Right lobe of liver (tissue), 6 donors: ENCODE measurements at regions of chr17 and their contacts with region 1.

Region 1: DNA sequence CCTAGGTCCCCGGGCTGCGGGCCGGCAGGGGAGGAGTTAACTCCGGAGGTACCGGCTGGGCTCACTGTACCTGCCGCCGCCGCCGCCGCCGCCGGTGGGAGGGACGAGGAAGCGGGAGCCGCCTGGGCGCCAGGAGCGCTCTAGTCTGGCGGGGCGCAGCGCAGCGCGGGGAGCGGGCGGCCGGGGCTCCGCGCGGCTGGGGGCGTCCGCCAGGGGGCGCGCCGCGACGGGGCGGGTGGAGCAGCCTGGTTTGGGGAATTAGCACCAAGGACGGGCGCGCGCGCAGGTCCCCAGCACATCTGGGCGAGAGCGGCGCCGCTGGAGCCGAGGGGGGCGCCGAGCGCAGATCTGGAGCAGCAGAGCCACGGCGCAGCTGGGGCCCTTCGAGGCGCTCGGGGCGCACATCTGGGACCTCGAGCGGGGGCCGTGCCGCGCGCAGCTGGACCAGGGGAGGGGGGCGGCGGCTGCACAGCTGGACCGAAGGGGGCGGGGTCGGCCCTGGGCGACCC is at the start of gene NXPH3:
- DNase-seq: peak in 2 of 3 donors; percentile 64 to 72
- ATAC-seq: peak; percentile 61 to 85 (median 67)
- H3K4me3 ChIP-seq: peak within 1 kb of the TSS; percentile 28 to 45 (median 36)
- H3K27ac ChIP-seq: no peak within 1 kb of the TSS
- H3K4me1 ChIP-seq: peaks cover 0 to 8% (median 0%) of the 10 kb centered on the region in 4 donors
- H3K27me3 ChIP-seq: peaks cover 0 to 9% of the 10 kb centered on the region in 2 donors
- CTCF ChIP-seq: peak; percentile 24 to 80 (median 57)
- POLR2A ChIP-seq: no peak
- total RNA-seq, gene NXPH3: 0.09 to 0.43 (median 0.21) TPM in 5 of 6 experiments, not detected in the other

Region 2: DNA sequence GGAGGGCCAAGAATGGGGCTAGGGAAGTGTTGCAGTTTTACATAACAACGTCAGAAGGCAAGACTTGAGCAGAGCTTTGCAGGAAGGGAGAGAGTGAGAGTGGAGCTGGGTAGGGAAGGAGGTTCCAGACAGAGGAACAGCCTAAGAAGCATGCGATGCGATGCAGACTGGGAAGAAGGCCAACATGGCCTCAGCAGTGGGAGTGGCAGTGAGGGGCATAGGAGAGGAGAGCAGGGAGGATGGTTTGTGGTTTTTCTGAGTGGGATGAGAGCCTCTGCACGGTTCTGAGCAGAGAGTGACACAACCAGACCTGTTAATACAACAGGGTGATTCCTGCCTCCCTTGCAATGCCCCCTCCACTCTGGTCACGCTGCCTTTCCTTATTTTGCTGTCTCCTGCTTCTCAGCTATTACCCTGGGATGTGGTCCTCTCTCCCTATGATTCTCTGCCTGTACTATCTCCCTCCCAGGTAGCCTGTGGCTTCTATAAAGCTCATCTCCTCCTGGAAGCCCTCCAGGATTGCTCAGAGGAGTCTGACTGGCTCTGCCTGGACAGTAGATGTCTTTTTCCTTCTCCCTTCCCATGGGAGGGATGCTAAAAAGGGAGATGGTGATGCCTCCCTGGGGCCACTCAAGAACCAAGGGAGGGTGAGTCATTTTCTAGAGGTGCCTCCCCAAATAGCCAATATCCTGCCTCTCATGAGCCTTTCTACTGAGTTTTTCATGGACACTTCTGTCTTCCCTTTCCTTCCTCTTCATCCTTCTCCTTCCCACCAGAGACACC is 119.3 kb before region 1 on chr17:
- intact Hi-C with region 1: no loop called
- DNase-seq: no peak
- ATAC-seq: no peak
- H3K4me3 ChIP-seq: no peak overlapping the region
- H3K27ac ChIP-seq: no peak overlapping the region
- H3K4me1 ChIP-seq: no peaks in the 10 kb centered on the region
- H3K27me3 ChIP-seq: no peaks in the 10 kb centered on the region
- CTCF ChIP-seq: no peak
- POLR2A ChIP-seq: no peak

Region 3: GRCh38 chr17:49482144-49482817 is 93.4 kb before region 1 on chr17:
- intact Hi-C with region 1: no loop called
- DNase-seq: no peak
- ATAC-seq: no peak
- H3K4me3 ChIP-seq: no peak overlapping the region
- H3K27ac ChIP-seq: no peak overlapping the region
- H3K4me1 ChIP-seq: no peaks in the 10 kb centered on the region
- H3K27me3 ChIP-seq: no peaks in the 10 kb centered on the region
- CTCF ChIP-seq: no peak
- POLR2A ChIP-seq: no peak

Region 4: GRCh38 chr17:49634485-49634860 is 58.8 kb after region 1 on chr17:
- intact Hi-C with region 1: no loop called
- DNase-seq: no peak
- ATAC-seq: peak in 1 of 4 donors; percentile 28
- H3K4me3 ChIP-seq: no peak overlapping the region
- H3K27ac ChIP-seq: no peak overlapping the region
- H3K4me1 ChIP-seq: peaks cover 0 to 68% (median 25%) of the 10 kb centered on the region in 4 donors
- H3K27me3 ChIP-seq: no peaks in the 10 kb centered on the region
- CTCF ChIP-seq: no peak
- POLR2A ChIP-seq: no peak

Region 5: GRCh38 chr17:49694847-49695683 is 119.4 kb after region 1 on chr17:
- intact Hi-C with region 1: loop called (anchors 2 to 5 kb)
- DNase-seq: peak in 1 of 3 donors; percentile 38
- ATAC-seq: peak; percentile 67 to 82 (median 75)
- H3K4me3 ChIP-seq: no peak overlapping the region
- H3K27ac ChIP-seq: no peak overlapping the region
- H3K4me1 ChIP-seq: no peaks in the 10 kb centered on the region
- H3K27me3 ChIP-seq: peaks cover 0 to 3% of the 10 kb centered on the region in 2 donors
- CTCF ChIP-seq: peak; percentile 89 to 93 (median 91)
- POLR2A ChIP-seq: no peak

Region 6: GRCh38 chr17:49699966-49700575 is 124.4 kb after region 1 on chr17:
- intact Hi-C with region 1: loop called (anchors 2 to 5 kb)
- DNase-seq: no peak
- ATAC-seq: no peak
- H3K4me3 ChIP-seq: no peak overlapping the region
- H3K27ac ChIP-seq: no peak overlapping the region
- H3K4me1 ChIP-seq: peaks cover 0 to 11% (median 3%) of the 10 kb centered on the region in 4 donors
- H3K27me3 ChIP-seq: no peaks in the 10 kb centered on the region
- CTCF ChIP-seq: no peak
- POLR2A ChIP-seq: no peak

Region 7: GRCh38 chr17:49779739-49780231 is 204.2 kb after region 1 on chr17:
- intact Hi-C with region 1: loop called (anchors 10 kb)
- DNase-seq: no peak
- ATAC-seq: peak; percentile 81 to 91 (median 86)
- H3K4me3 ChIP-seq: no peak overlapping the region
- H3K27ac ChIP-seq: no peak overlapping the region
- H3K4me1 ChIP-seq: peaks cover 0 to 6% (median 0%) of the 10 kb centered on the region in 4 donors
- H3K27me3 ChIP-seq: no peaks in the 10 kb centered on the region
- CTCF ChIP-seq: peak; percentile 63 to 69 (median 66)
- POLR2A ChIP-seq: no peak

Region 8: GRCh38 chr17:49788478-49789242 is 213.0 kb after region 1 on chr17 and contains the start of gene KAT7:
- intact Hi-C with region 1: loop called in 1 of 2 experiments (anchors 10 kb)
- DNase-seq: peak; percentile 99 to 100 (median 99)
- ATAC-seq: peak; percentile 91 to 97 (median 94)
- H3K4me3 ChIP-seq: peak within 1 kb of the TSS; percentile 71 to 86 (median 84)
- H3K27ac ChIP-seq: peak within 1 kb of the TSS; percentile 95 to 96 (median 95)
- H3K4me1 ChIP-seq: peaks cover 0 to 13% (median 6%) of the 10 kb centered on the region in 4 donors
- H3K27me3 ChIP-seq: no peaks in the 10 kb centered on the region
- CTCF ChIP-seq: peak in 1 of 4 donors; percentile 18
- POLR2A ChIP-seq: peak; percentile 80
- total RNA-seq, gene KAT7: 10.8 to 21.3 (median 15.2) TPM